ENCODE measurements at regions of chr7 and their contacts with region 1.

Region 1: GRCh38 chr7:47179812-47180515 is 401.9 kb downstream of the TNS3 start:
- DNase-seq: peak in 1 of 2 donors; percentile 56
- ATAC-seq: peak; percentile 44 to 74 (median 61)
- H3K4me3 ChIP-seq: no peak overlapping the region
- H3K27ac ChIP-seq: no peak overlapping the region
- H3K4me1 ChIP-seq: peaks cover 7 to 51% (median 29%) of the 10 kb centered on the region in 9 donors
- H3K27me3 ChIP-seq: no peaks in the 10 kb centered on the region
- CTCF ChIP-seq: peak; percentile 55 to 91 (median 82)

Region 2: GRCh38 chr7:45890902-45891461 is 1289.0 kb before region 1 on chr7:
- intact Hi-C with region 1: loop called in 1 of 10 experiments (anchors 2 kb)
- DNase-seq: no peak
- ATAC-seq: no peak
- H3K4me3 ChIP-seq: no peak overlapping the region
- H3K27ac ChIP-seq: no peak overlapping the region
- H3K4me1 ChIP-seq: peaks cover 0 to 14% (median 10%) of the 10 kb centered on the region in 9 donors
- H3K27me3 ChIP-seq: peaks cover 7 to 64% (median 48%) of the 10 kb centered on the region in 7 donors
- CTCF ChIP-seq: peak; percentile 34 to 79 (median 69)

Region 3: GRCh38 chr7:46352004-46352954 is 827.7 kb before region 1 on chr7:
- intact Hi-C with region 1: loop called in 4 of 10 experiments (anchors 1 to 10 kb)
- DNase-seq: peak in 1 of 2 donors; percentile 53
- ATAC-seq: peak in 6 of 8 donors; percentile 55 to 71 (median 64)
- H3K4me3 ChIP-seq: no peak overlapping the region
- H3K27ac ChIP-seq: no peak overlapping the region
- H3K4me1 ChIP-seq: no peaks in the 10 kb centered on the region
- H3K27me3 ChIP-seq: peaks cover 0 to 6% (median 0%) of the 10 kb centered on the region in 7 donors
- CTCF ChIP-seq: peak; percentile 46 to 81 (median 66)

Region 4: DNA sequence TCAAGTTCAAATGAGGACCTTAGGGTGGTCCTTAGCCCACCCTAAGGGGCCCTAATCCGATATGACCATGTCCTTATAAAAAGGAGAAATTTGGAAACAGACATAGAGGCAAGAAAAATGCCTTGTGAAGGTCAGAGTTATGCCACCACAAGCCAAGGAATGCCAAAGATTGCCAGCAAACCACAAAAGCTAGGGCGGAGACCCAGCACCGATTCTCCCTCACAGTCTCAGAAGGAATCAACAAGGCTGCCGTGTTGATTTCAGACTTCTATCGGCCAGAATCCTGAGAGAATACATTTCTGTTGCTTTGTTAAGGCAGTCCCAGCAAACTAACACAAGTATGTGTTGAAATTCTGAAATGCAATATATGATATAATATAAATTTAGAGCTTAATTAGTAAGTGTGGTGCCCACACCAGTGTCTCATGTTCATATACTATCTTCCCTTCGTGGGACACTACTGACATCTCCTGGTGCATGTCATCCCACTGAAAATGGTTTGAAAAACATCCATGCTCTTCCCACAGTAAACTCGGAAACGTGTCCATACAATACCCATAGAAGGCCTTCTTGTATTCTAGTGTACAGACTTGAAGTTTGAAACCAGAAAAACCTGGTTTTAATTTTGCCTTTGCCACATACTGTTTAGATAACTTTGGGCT is 52.9 kb after region 1 on chr7:
- intact Hi-C with region 1: loop called in 2 of 10 experiments (anchors 5 to 10 kb)
- DNase-seq: no peak
- ATAC-seq: peak in 3 of 8 donors; percentile 32 to 46 (median 39)
- H3K4me3 ChIP-seq: no peak overlapping the region
- H3K27ac ChIP-seq: no peak overlapping the region
- H3K4me1 ChIP-seq: peaks cover 0 to 9% (median 0%) of the 10 kb centered on the region in 9 donors
- H3K27me3 ChIP-seq: no peaks in the 10 kb centered on the region
- CTCF ChIP-seq: peak in 8 of 9 donors; percentile 11 to 55 (median 42)

Region 5: DNA sequence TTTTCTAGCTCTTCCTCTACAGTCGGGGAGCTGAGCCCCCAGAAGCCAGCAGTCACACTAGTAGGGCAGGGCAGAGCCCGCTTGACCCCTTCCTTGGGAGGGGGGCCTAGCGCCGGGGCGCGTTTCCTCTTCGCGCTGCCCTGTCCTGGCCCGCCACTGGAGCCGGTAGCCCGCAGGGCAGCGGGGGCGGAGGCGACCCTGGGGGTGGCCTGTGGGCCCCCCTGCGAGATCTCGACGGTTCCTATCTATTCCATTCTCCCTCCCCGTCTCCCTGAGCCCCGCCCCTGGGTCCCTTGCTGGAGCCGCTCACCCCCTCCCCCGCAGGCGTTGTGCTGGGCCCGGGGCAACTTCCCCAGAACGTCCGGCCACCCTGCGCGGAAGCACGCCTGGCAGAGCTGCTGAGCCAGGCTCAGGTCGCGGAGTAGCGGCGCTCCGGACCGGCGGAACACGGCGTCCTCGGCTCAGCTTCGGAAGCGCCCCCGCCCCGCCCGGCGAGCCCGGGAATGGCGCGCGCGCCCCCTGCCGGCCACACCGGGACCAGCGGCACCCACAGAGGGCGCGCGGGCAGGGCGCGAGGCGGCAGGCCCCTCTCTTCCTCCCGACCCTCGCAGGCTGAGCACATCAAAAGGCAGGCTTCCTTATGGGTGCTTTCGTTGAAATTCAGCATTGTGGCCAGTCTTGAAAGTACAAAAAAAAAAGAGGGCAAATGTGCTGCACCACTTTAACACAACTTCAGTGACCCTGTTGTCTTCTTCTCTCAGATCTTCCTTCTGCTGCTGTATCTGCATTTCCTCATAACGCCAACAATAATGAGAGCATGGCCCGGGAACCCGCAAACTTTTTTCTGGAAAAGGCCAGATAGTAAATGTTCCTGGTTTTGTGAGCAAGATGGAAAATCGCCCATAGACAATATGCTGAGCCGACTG is 74.4 kb after region 1 on chr7:
- intact Hi-C with region 1: loop called in 3 of 10 experiments (anchors 5 to 10 kb)
- DNase-seq: peak; percentile 73 to 88
- ATAC-seq: peak; percentile 91 to 96 (median 92)
- H3K4me3 ChIP-seq: peak overlapping the region; percentile 32 to 80 (median 67)
- H3K27ac ChIP-seq: peak overlapping the region; percentile 81 to 96 (median 89)
- H3K4me1 ChIP-seq: peaks cover 2 to 17% (median 15%) of the 10 kb centered on the region in 9 donors
- H3K27me3 ChIP-seq: no peaks in the 10 kb centered on the region
- CTCF ChIP-seq: peak; percentile 88 to 100 (median 95)

Measured in heart right ventricle (tissue), 16 donors.